ENCODE measurements at regions of chr3 and their contacts with region 1.

Region 1: GRCh38 chr3:19946832-19947548 is at the start of gene RAB5A:
- DNase-seq: peak; percentile 99
- H3K4me3 ChIP-seq: peak within 1 kb of the TSS; percentile 90
- H3K27ac ChIP-seq: peak within 1 kb of the TSS; percentile 93
- H3K4me1 ChIP-seq: peaks cover 7% of the 10 kb centered on the region
- H3K27me3 ChIP-seq: no peaks in the 10 kb centered on the region
- CTCF ChIP-seq: no peak
- total RNA-seq, gene RAB5A: 49.7 and 50.1 TPM in 2 replicates

Region 2: DNA sequence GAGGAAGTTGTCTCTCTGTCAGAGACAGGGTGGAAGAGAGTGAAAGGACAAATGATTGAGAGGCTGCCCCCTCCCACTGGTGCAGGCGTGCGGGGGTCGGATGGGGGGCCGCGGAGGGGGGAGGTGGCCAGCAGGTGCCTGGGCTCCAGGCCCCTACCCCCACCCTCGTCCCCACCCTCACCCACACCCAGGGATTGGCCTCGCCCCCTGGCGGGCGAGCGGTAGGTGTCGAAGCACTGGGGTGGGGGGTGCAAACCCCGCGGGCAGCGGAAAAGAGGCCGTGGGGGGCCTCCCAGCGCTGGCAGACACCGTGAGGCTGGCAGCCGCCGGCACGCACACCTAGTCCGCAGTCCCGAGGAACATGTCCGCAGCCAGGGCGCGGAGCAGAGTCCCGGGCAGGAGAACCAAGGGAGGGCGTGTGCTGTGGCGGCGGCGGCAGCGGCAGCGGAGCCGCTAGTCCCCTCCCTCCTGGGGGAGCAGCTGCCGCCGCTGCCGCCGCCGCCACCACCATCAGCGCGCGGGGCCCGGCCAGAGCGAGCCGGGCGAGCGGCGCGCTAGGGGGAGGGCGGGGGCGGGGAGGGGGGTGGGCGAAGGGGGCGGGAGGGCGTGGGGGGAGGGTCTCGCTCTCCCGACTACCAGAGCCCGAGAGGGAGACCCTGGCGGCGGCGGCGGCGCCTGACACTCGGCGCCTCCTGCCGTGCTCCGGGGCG is 92.9 kb after region 1 on chr3 and contains the start of gene KAT2B:
- CTCF ChIA-PET with region 1: no interaction called
- POLR2A ChIA-PET with region 1: no interaction called
- intact Hi-C with region 1: loop called (anchors 5 kb)
- DNase-seq: peak; percentile 78
- H3K4me3 ChIP-seq: peak within 1 kb of the TSS; percentile 76
- H3K27ac ChIP-seq: peak within 1 kb of the TSS; percentile 70
- H3K4me1 ChIP-seq: peaks cover 7% of the 10 kb centered on the region
- H3K27me3 ChIP-seq: no peaks in the 10 kb centered on the region
- CTCF ChIP-seq: peak; percentile 72
- total RNA-seq, gene KAT2B: 4.6 and 5.4 TPM in 2 replicates

Region 3: DNA sequence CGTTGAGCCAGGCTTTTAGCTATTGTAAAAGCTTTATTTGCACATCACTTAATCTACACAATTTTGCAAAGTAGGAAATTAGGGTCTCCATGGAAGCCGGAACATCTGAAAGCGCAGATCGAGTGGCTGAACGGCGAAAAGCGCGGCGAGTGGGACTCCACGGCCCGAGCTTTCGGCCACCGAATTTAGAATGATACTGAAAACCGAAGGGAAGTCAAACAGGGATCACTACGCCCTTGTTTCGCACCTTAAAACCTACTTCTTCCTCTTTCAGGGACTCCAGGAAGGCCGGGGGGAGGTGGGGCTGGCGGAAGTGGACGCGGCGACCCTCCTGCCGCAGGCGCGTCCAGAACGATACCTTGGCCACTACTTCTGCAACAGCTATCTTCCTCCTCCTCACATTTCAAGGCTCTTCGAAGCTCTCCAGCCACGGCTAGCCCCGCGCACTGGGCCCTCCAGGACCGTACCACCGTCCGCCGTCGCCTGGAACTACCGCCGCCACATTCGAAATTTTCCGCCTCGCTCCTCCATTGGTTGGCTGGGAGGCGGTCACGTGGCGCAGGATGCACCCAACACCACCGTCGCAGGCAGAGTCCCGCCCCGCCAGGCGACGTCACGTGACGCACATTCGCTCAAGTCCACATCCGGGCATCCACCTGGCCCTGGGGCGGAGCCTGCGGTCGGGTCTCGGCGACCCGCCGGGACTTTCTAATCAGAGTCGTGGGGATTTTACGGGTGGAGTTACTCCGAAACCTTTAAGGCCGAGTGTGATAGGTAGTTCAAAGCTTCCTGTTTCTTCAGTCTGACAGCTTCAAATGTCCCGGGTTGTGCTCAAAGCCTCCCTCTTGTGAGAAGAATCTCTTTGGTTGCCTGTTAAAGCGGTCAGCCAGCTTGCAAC is 239.0 kb after region 1 on chr3 and contains the start of gene SGO1:
- CTCF ChIA-PET with region 1: no interaction called
- POLR2A ChIA-PET with region 1: interaction called, 11 read pairs
- intact Hi-C with region 1: no loop called
- DNase-seq: peak; percentile 98
- H3K4me3 ChIP-seq: peak within 1 kb of the TSS; percentile 82
- H3K27ac ChIP-seq: peak within 1 kb of the TSS; percentile 91
- H3K4me1 ChIP-seq: peaks cover 9% of the 10 kb centered on the region
- H3K27me3 ChIP-seq: no peaks in the 10 kb centered on the region
- CTCF ChIP-seq: no peak
- total RNA-seq, gene SGO1: 31.4 and 31.7 TPM in 2 replicates